ENCODE measurements at regions of chr10 and their contacts with region 1.

Region 1: GRCh38 chr10:25875556-25876165 is 58.4 kb upstream of the MYO3A start:
- DNase-seq: peak; percentile 79 to 83
- H3K4me3 ChIP-seq: no peak overlapping the region
- H3K4me3 Mint-ChIP-seq: no peak overlapping the region
- H3K27ac Mint-ChIP-seq: no peak overlapping the region
- H3K4me1 ChIP-seq: no peaks in the 10 kb centered on the region
- H3K4me1 Mint-ChIP-seq: no peaks in the 10 kb centered on the region
- H3K27me3 ChIP-seq: no peaks in the 10 kb centered on the region
- H3K27me3 Mint-ChIP-seq: peaks cover 4% of the 10 kb centered on the region
- CTCF ChIP-seq: peak; percentile 93 to 97

Region 2: DNA sequence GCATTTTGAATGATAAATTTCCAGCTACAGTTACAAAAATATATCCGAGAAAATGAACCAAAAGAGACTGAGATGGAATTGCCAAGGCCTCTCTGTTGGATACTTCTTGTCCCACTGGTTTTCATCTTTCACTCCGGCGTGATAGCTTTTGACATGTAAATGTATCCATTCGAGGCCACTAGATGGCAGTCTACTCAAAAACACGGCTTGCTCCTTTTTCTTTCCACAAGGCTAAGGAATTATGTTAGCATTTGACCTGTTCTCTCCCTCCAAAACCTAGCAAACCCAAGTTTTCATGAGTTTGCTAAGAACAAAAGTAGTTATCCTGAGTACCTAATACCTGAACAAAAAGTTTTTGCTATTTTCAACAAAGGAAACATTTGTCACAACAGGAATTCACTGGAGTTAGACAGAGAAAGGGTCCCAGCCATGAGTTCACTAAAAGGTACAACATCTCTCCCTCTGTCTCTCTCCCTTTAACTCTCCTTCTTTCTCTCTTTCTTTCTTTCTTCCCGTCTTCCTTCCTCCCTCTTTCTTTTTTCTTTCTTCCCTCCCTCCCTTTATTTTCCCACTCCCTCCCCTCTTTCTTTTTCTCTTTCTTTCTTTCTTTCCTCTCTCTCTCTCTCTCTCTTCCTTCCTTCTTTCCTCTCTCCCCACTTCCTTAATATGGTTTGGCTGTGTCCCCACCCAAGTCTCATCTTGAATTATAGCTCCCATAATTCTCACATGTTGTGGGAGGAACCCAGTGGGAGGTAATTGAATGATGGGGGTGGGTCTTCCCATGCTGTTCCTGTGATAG is 149.5 kb before region 1 on chr10:
- CTCF ChIA-PET with region 1: interaction called, 3 read pairs
- POLR2A ChIA-PET with region 1: no interaction called
- intact Hi-C with region 1: loop called (anchors 1 kb)
- DNase-seq: peak; percentile 51 to 62
- H3K4me3 ChIP-seq: no peak overlapping the region
- H3K4me3 Mint-ChIP-seq: no peak overlapping the region
- H3K27ac Mint-ChIP-seq: no peak overlapping the region
- H3K4me1 ChIP-seq: no peaks in the 10 kb centered on the region
- H3K4me1 Mint-ChIP-seq: no peaks in the 10 kb centered on the region
- H3K27me3 ChIP-seq: no peaks in the 10 kb centered on the region
- H3K27me3 Mint-ChIP-seq: peaks cover 5% of the 10 kb centered on the region
- CTCF ChIP-seq: peak; percentile 78

Region 3: DNA sequence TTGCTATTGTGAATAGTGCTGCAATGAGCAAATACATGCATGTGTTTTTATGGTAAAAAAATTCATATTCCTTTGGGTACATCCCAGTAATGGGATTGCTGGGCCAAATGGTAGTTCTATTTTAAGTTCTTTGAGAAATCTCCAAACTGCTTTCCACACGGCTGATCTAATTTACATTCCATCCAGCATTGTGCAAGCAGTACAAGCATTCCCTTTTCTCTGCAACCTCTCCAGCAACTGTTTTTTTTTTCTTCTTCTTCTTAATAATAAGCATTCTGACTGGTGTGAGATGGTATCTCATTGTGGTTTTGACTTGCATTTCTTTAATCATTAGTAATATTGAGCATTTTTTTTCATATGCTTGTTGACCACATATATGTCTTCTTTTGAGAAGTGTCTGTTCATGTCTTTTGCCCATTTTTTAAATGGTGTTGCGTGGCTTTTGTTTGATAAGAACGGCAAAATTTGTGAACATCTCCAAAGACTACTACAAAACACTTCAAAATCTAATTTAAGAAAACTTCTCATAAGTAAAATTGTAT is 77.7 kb before region 1 on chr10:
- CTCF ChIA-PET with region 1: no interaction called
- POLR2A ChIA-PET with region 1: no interaction called
- intact Hi-C with region 1: no loop called
- DNase-seq: no peak
- H3K4me3 ChIP-seq: no peak overlapping the region
- H3K4me3 Mint-ChIP-seq: no peak overlapping the region
- H3K27ac Mint-ChIP-seq: no peak overlapping the region
- H3K4me1 ChIP-seq: no peaks in the 10 kb centered on the region
- H3K4me1 Mint-ChIP-seq: no peaks in the 10 kb centered on the region
- H3K27me3 ChIP-seq: no peaks in the 10 kb centered on the region
- H3K27me3 Mint-ChIP-seq: peaks cover 6% of the 10 kb centered on the region
- CTCF ChIP-seq: no peak

Region 4: GRCh38 chr10:26157734-26158133 is 282.1 kb after region 1 on chr10:
- CTCF ChIA-PET with region 1: interaction called, 6 read pairs
- POLR2A ChIA-PET with region 1: no interaction called
- intact Hi-C with region 1: loop called (anchors 5 kb)
- DNase-seq: peak in 1 of 2 experiments; percentile 19
- H3K4me3 ChIP-seq: no peak overlapping the region
- H3K4me3 Mint-ChIP-seq: no peak overlapping the region
- H3K27ac Mint-ChIP-seq: no peak overlapping the region
- H3K4me1 ChIP-seq: no peaks in the 10 kb centered on the region
- H3K4me1 Mint-ChIP-seq: no peaks in the 10 kb centered on the region
- H3K27me3 ChIP-seq: no peaks in the 10 kb centered on the region; the same call in 1 of the 2 replicates
- H3K27me3 Mint-ChIP-seq: peaks cover 7% of the 10 kb centered on the region
- CTCF ChIP-seq: peak; percentile 32 to 48

Measured in Caco-2 (cell line).